ENCODE measurements at regions of chr7 and their contacts with region 1.

Region 1: GRCh38 chr7:30284298-30285066 is at the start of gene ZNRF2:
- DNase-seq: peak; percentile 99
- H3K4me3 Mint-ChIP-seq: peak within 1 kb of the TSS; percentile 76
- H3K27ac Mint-ChIP-seq: peak within 1 kb of the TSS; percentile 78
- H3K4me1 Mint-ChIP-seq: peaks cover 43% of the 10 kb centered on the region
- H3K27me3 Mint-ChIP-seq: no peaks in the 10 kb centered on the region
- total RNA-seq, gene ZNRF2: 10.2 and 10.4 TPM in 2 replicates

Region 2: GRCh38 chr7:30263090-30263710 is 21.3 kb before region 1 on chr7:
- intact Hi-C with region 1: no loop called
- DNase-seq: no peak
- H3K4me3 Mint-ChIP-seq: no peak overlapping the region
- H3K27ac Mint-ChIP-seq: no peak overlapping the region
- H3K4me1 Mint-ChIP-seq: no peaks in the 10 kb centered on the region
- H3K27me3 Mint-ChIP-seq: peaks cover 2% of the 10 kb centered on the region

Region 3: DNA sequence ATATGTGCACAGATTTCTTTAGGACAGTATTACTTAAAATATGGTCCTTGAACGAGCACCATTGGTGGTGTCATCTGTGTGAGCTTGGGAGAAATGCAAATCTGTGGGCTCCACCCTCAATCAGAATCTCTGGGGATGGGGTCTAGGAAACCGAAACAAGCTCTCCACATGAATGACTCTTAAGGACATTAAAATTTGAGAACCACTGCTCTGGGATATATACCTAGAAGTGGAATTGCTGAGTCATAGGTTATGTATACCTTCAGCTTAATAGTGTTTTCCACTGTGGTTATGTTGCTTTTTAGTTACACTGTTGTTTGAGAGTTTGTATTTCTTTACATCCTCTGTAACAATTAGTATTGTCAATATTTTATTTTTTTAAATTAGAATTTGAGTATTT is 23.9 kb after region 1 on chr7:
- intact Hi-C with region 1: loop called (anchors 2 kb)
- DNase-seq: no peak
- H3K4me3 Mint-ChIP-seq: no peak overlapping the region
- H3K27ac Mint-ChIP-seq: no peak overlapping the region
- H3K4me1 Mint-ChIP-seq: peaks cover 31% of the 10 kb centered on the region
- H3K27me3 Mint-ChIP-seq: no peaks in the 10 kb centered on the region

Region 4: DNA sequence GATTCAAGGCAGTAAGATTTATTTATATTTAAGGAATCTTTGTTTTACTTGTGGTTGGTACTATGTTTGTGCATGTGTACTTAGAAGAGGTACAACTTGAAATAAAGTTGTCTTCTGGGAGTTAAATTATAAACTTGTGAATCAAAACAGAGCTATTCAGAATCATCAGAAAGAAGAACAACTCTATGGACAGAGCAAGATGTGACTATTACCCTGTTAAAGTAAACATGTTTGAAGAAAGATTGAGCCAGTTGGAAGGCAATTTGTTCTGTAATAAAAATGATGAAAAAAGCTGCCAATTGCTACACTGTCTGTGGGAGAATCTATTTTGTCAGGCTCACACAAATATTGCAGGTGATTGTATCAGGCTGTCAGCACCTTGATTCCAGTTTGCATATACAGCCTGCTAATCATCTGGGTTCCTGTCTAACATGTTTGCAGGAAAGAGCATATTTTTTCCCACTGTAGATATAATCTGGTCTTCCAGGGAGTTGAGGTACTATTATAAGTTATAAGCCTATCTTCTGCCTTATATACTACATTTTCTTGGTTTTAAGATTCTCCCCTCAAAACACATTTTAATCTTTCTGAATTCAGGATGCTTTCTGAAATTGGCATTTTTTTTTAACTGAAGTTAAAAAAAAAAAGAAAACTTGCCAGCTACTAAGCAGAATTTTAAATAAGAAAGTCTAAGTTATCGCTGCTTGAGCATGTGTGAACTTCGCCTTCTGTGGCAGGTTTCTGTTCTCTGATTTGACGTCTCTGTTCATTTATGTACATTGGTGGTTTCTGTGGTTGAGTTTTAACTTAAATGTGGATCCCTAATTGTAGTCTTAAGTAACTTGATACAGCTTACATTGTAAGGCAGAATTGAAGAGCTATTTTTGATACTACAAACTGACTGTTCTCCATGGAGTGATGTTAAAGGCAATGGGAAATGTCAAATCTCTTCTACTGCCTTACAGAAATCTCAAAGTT is 45.9 kb after region 1 on chr7:
- intact Hi-C with region 1: loop called (anchors 1 kb)
- DNase-seq: no peak
- H3K4me3 Mint-ChIP-seq: peak overlapping the region; percentile 60
- H3K27ac Mint-ChIP-seq: peak overlapping the region; percentile 69
- H3K4me1 Mint-ChIP-seq: peaks cover 44% of the 10 kb centered on the region
- H3K27me3 Mint-ChIP-seq: no peaks in the 10 kb centered on the region

Region 5: GRCh38 chr7:30478349-30479201 is 194.1 kb after region 1 on chr7 and contains the start of gene NOD1:
- intact Hi-C with region 1: loop called (anchors 1 kb)
- DNase-seq: peak; percentile 70
- H3K4me3 Mint-ChIP-seq: peak within 1 kb of the TSS; percentile 91
- H3K27ac Mint-ChIP-seq: peak within 1 kb of the TSS; percentile 89
- H3K4me1 Mint-ChIP-seq: peaks cover 51% of the 10 kb centered on the region
- H3K27me3 Mint-ChIP-seq: no peaks in the 10 kb centered on the region
- total RNA-seq, gene NOD1: 14.8 and 15.8 TPM in 2 replicates

Region 6: GRCh38 chr7:30594549-30595435 is 310.3 kb after region 1 on chr7 and contains the start of gene GARS1:
- intact Hi-C with region 1: loop called (anchors 2 kb)
- DNase-seq: peak; percentile 85
- H3K4me3 Mint-ChIP-seq: peak within 1 kb of the TSS; percentile 98
- H3K27ac Mint-ChIP-seq: peak within 1 kb of the TSS; percentile 98
- H3K4me1 Mint-ChIP-seq: peaks cover 44% of the 10 kb centered on the region
- H3K27me3 Mint-ChIP-seq: no peaks in the 10 kb centered on the region
- total RNA-seq, gene GARS1: 208 and 221 TPM in 2 replicates